ENCODE measurements at regions of chr1 and their contacts with region 1.

Region 1: GRCh38 chr1:157073944-157074767 is 25.5 kb downstream of the ETV3L start:
- DNase-seq: peak; percentile 75 to 77
- H3K4me3 ChIP-seq: peak overlapping the region; percentile 28
- H3K4me3 Mint-ChIP-seq: peak overlapping the region; percentile 63
- H3K27ac Mint-ChIP-seq: no peak overlapping the region
- H3K4me1 ChIP-seq: no peaks in the 10 kb centered on the region
- H3K4me1 Mint-ChIP-seq: peaks cover 8% of the 10 kb centered on the region
- H3K27me3 ChIP-seq: no peaks in the 10 kb centered on the region
- H3K27me3 Mint-ChIP-seq: no peaks in the 10 kb centered on the region
- CTCF ChIP-seq: peak; percentile 71 to 76

Region 2: DNA sequence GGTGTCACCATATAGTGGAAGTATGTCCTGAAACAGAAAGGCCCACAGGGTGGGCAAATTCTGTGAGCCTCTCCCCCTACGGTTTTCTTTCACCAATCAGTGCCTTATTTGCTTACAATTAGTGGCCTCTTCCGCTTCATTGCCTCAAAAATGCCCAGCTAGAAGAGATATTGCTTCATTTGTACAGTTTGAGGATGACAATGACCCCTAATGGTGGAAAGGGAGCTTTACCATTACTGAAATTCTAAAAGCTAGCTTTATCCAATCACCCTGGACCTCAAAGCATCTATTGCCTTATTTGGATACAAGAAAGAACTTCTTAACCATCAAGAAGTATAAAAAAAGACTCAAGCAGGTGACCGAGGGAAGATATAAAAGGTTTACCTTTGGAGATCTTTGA is 104.1 kb before region 1 on chr1:
- CTCF ChIA-PET with region 1: interaction called, 13 read pairs
- POLR2A ChIA-PET with region 1: no interaction called
- intact Hi-C with region 1: no loop called
- DNase-seq: no peak
- H3K4me3 ChIP-seq: no peak overlapping the region
- H3K4me3 Mint-ChIP-seq: no peak overlapping the region
- H3K27ac Mint-ChIP-seq: no peak overlapping the region
- H3K4me1 ChIP-seq: peaks cover 35% of the 10 kb centered on the region
- H3K4me1 Mint-ChIP-seq: peaks cover 19% of the 10 kb centered on the region
- H3K27me3 ChIP-seq: no peaks in the 10 kb centered on the region
- H3K27me3 Mint-ChIP-seq: no peaks in the 10 kb centered on the region
- CTCF ChIP-seq: peak; percentile 12 to 22

Region 3: GRCh38 chr1:156993446-156994147 is 80.6 kb before region 1 on chr1:
- CTCF ChIA-PET with region 1: interaction called, 13 read pairs
- POLR2A ChIA-PET with region 1: no interaction called
- intact Hi-C with region 1: loop called (anchors 10 kb)
- DNase-seq: peak in 1 of 2 experiments; percentile 9
- H3K4me3 ChIP-seq: no peak overlapping the region
- H3K4me3 Mint-ChIP-seq: peak overlapping the region; percentile 8
- H3K27ac Mint-ChIP-seq: no peak overlapping the region
- H3K4me1 ChIP-seq: peaks cover 47% of the 10 kb centered on the region
- H3K4me1 Mint-ChIP-seq: peaks cover 45% of the 10 kb centered on the region
- H3K27me3 ChIP-seq: no peaks in the 10 kb centered on the region
- H3K27me3 Mint-ChIP-seq: no peaks in the 10 kb centered on the region
- CTCF ChIP-seq: no peak

Region 4: GRCh38 chr1:157000686-157001085 is 73.5 kb before region 1 on chr1:
- CTCF ChIA-PET with region 1: interaction called, 13 read pairs
- POLR2A ChIA-PET with region 1: no interaction called
- intact Hi-C with region 1: loop called (anchors 10 kb)
- DNase-seq: no peak
- H3K4me3 ChIP-seq: no peak overlapping the region
- H3K4me3 Mint-ChIP-seq: no peak overlapping the region
- H3K27ac Mint-ChIP-seq: no peak overlapping the region
- H3K4me1 ChIP-seq: peaks cover 16% of the 10 kb centered on the region
- H3K4me1 Mint-ChIP-seq: peaks cover 25% of the 10 kb centered on the region
- H3K27me3 ChIP-seq: no peaks in the 10 kb centered on the region
- H3K27me3 Mint-ChIP-seq: no peaks in the 10 kb centered on the region
- CTCF ChIP-seq: no peak

Region 5: DNA sequence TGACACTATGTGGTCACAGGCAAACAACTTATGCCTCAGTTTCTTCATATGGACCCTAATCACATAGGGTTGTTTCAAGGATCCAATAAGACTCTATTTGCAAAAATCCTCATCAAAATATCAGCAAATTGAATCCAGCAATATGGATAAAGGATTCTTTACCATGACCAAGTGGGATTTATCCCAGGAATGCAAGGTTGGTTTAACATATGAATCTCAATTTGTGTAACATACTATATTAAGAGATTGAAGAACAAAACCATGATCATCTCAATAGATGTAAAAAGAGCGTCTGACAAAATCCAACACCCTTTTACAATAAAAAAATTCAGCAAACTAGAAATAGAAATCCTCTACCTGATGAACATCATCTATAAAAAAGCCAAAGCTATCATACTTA is 52.5 kb before region 1 on chr1:
- CTCF ChIA-PET with region 1: no interaction called
- POLR2A ChIA-PET with region 1: no interaction called
- intact Hi-C with region 1: no loop called
- DNase-seq: no peak
- H3K4me3 ChIP-seq: no peak overlapping the region
- H3K4me3 Mint-ChIP-seq: no peak overlapping the region
- H3K27ac Mint-ChIP-seq: no peak overlapping the region
- H3K4me1 ChIP-seq: no peaks in the 10 kb centered on the region
- H3K4me1 Mint-ChIP-seq: no peaks in the 10 kb centered on the region
- H3K27me3 ChIP-seq: no peaks in the 10 kb centered on the region
- H3K27me3 Mint-ChIP-seq: no peaks in the 10 kb centered on the region
- CTCF ChIP-seq: no peak

Measured in Caco-2 (cell line).